Activated B cell treated with CpG ODN at 0.5 μM for 24 hours (primary cell): ENCODE measurements at regions of chr1 and their contacts with region 1.

Region 1: DNA sequence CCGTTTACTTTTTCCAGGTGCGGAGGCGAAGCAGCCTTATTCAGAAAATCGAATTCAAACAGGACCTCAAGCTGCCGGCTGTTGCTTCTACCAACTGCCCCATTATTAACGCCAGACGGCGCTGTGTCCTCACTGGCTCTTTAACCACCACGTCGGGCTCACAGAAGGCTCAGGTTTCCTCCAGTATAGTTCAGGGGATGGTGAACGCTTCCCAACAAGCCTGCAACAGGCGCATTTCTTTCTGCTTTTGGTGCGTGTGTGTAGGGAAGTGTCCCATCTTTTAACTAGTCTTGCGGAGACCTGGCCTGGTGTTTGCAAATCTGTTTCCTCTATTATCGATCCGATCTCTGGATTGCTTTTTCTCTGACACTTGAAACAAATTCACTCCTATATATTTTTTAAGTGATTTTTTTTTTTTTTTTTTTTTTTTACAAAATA is 791 bp upstream of the STUM start:
- DNase-seq: peak; percentile 52
- ATAC-seq: peak; percentile 71
- H3K4me3 Mint-ChIP-seq: peak overlapping the region; percentile 28
- H3K27ac Mint-ChIP-seq: no peak overlapping the region
- H3K4me1 Mint-ChIP-seq: peaks cover 21% of the 10 kb centered on the region
- H3K27me3 Mint-ChIP-seq: peaks cover 21% of the 10 kb centered on the region
- CTCF ChIP-seq: peak; percentile 50

Region 2: DNA sequence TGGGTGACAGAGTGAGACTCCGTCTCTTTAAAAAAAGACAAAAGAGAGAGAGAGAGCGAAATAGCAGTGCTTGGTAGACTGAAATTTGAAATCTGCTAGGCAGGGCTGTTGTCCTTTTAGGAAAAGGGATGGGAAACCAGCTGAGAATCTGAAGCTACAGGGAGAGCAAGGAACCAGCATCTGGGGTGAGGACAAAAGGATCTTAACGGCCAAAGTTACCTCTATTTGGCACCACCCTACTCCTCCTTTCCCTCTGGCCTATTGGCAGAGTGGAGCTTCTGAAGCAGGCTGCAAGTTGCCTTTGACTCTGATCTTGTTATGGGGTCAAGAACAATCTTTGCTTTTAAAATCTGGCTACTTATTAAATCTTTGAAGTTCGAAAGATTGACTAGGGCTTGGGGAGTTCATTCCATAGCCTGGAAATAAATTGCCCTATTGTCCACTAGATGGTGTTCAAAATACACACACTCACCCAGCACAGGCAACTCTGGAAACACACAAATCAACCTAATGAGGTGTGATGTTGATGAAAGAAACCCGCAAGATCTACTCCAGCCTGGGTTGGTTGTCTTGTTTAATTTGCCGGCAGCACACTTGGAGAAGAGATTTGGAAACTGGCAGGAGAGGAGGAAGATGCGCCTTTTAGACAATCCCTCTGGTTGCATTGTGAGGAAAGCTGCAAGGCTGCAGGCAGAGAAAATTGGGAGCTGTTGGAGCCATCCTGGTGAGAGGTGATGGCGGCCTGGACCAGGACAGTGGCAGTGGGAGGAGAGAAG is 123.4 kb before region 1 on chr1:
- CTCF ChIA-PET with region 1: interaction called, 4 read pairs
- POLR2A ChIA-PET with region 1: no interaction called
- intact Hi-C with region 1: loop called (anchors 1 kb)
- DNase-seq: no peak
- ATAC-seq: peak; percentile 53
- H3K4me3 Mint-ChIP-seq: no peak overlapping the region
- H3K27ac Mint-ChIP-seq: peak overlapping the region; percentile 35
- H3K4me1 Mint-ChIP-seq: peaks cover 21% of the 10 kb centered on the region
- H3K27me3 Mint-ChIP-seq: no peaks in the 10 kb centered on the region
- CTCF ChIP-seq: no peak

Region 3: DNA sequence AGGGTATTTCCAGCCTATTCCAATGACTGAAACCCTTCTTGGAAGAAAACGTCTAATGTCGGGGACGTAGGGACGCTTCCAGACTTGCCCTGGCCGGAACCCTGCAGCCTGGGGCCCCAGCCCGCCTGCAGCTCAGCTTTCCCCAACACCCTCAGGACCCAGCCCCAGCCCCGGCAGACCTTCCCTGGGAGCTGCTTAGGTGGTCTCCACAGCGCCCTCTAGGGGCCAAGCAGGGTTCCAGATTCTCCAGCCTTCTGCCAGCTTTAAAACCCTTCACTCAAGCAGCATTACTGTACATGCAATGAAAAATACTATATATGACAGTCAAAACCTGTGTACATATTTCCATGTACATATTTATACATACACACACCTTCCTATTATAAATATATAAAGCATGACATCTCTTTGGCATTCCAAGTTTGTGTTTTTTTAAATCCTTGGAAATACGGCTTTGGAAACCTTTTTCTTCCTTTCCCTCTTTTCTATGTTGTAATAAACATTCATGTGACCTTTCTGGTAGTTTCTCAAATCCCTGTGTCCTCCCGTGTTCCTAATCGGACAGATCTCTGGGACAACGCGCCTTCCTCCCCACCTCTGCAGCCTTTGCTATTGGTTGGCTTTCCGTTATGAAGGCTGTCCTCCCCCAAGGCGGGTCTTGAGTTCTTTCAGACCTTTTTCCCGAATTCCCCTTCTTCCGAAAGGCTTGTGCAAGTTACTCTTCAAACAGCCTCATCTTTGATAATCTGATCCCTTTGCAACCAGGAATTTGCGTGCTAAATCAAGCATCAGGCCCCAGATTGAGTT is 61.1 kb after region 1 on chr1:
- CTCF ChIA-PET with region 1: interaction called, 9 read pairs
- POLR2A ChIA-PET with region 1: interaction called, 5 read pairs
- intact Hi-C with region 1: loop called (anchors 1 kb)
- DNase-seq: peak; percentile 55
- ATAC-seq: peak; percentile 61
- H3K4me3 Mint-ChIP-seq: no peak overlapping the region
- H3K27ac Mint-ChIP-seq: no peak overlapping the region
- H3K4me1 Mint-ChIP-seq: no peaks in the 10 kb centered on the region
- H3K27me3 Mint-ChIP-seq: peaks cover 5% of the 10 kb centered on the region
- CTCF ChIP-seq: peak; percentile 39

Region 4: GRCh38 chr1:226687426-226687825 is 139.7 kb after region 1 on chr1:
- CTCF ChIA-PET with region 1: interaction called, 3 read pairs
- POLR2A ChIA-PET with region 1: no interaction called
- intact Hi-C with region 1: loop called (anchors 5 kb)
- DNase-seq: no peak
- ATAC-seq: peak; percentile 12
- H3K4me3 Mint-ChIP-seq: peak overlapping the region; percentile 61
- H3K27ac Mint-ChIP-seq: peak overlapping the region; percentile 91
- H3K4me1 Mint-ChIP-seq: peaks cover 100% of the 10 kb centered on the region
- H3K27me3 Mint-ChIP-seq: no peaks in the 10 kb centered on the region
- CTCF ChIP-seq: no peak

Region 5: DNA sequence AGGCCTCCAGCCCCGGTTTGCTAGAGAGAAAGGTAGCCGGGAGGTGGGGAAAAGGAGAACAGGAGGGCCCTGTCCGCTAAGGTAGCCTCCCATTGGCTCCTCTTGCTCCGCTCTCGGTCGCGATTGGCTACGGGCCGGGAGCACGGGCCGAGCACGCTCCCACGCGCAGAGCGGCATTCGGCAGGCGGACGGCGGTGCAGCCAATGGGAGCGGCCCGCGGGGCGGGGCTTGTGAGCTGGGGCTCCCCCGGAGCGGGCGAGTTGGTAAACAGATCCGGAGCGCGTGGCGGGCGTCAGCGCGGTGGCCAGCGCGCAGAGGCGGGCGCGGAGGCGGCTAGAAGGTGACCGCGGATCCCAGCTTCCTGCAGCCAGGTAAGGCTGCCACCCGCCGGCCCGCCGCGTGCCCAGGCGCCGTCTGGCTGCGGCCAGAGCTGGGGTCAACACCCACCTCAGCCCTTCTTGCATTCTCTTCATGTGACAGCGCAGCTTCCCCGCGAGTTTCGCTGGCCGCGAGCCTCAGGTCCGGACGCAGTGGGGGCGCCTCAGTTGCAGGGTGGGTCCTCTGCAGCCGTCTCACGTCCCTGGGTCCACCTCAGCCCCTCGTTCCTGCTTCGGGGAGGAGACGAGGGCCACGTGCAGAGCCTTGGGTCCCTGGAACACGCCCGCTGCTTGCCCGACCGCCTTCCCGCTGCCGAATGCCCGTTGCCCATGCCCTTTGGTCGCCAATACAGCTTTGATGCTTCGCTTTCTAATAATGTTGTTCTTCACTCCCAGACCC is 392.4 kb after region 1 on chr1 and contains the start of gene COQ8A:
- CTCF ChIA-PET with region 1: no interaction called
- POLR2A ChIA-PET with region 1: no interaction called
- intact Hi-C with region 1: loop called (anchors 5 kb)
- DNase-seq: peak; percentile 97
- ATAC-seq: peak; percentile 93
- H3K4me3 Mint-ChIP-seq: peak within 1 kb of the TSS; percentile 89
- H3K27ac Mint-ChIP-seq: peak within 1 kb of the TSS; percentile 96
- H3K4me1 Mint-ChIP-seq: peaks cover 49% of the 10 kb centered on the region
- H3K27me3 Mint-ChIP-seq: no peaks in the 10 kb centered on the region
- CTCF ChIP-seq: no peak
- total RNA-seq, gene COQ8A: 24.7 and 28.5 TPM in 2 replicates

Region 6: GRCh38 chr1:227542143-227543120 is 994.7 kb after region 1 on chr1:
- CTCF ChIA-PET with region 1: no interaction called
- POLR2A ChIA-PET with region 1: no interaction called
- intact Hi-C with region 1: loop called (anchors 1 kb)
- DNase-seq: peak; percentile 90
- ATAC-seq: peak; percentile 97
- H3K4me3 Mint-ChIP-seq: peak overlapping the region; percentile 68
- H3K27ac Mint-ChIP-seq: no peak overlapping the region
- H3K4me1 Mint-ChIP-seq: peaks cover 5% of the 10 kb centered on the region
- H3K27me3 Mint-ChIP-seq: no peaks in the 10 kb centered on the region
- CTCF ChIP-seq: peak; percentile 65